ENCODE measurements at regions of chr13 and their contacts with region 1.

Region 1: GRCh38 chr13:111153279-111153976 is 38.3 kb downstream of the ARHGEF7 start:
- DNase-seq: peak; percentile 95
- ATAC-seq: peak; percentile 99

Region 2: DNA sequence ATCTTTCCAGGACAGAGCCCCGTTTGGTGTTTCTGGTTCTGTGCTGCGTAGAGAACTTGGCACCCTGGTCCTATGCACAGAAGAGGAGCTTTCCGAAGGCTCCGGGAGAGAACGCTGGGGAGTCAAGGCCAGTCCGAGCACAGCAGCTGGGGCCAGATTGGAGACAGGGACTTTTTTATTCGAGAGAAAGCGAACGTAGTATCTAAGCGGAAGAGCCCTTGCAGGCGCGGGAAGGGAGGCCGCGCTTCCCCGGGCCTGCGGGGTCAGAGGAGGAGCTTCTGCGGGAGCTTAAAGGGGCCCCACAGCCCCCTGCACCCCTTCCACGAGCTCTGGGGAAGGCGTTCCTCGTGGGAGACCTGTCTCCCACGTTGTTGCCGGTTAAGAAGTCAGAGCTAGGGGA is 86.9 kb before region 1 on chr13:
- intact Hi-C with region 1: loop called (anchors 5 kb)
- DNase-seq: no peak
- ATAC-seq: peak; percentile 55

Region 3: DNA sequence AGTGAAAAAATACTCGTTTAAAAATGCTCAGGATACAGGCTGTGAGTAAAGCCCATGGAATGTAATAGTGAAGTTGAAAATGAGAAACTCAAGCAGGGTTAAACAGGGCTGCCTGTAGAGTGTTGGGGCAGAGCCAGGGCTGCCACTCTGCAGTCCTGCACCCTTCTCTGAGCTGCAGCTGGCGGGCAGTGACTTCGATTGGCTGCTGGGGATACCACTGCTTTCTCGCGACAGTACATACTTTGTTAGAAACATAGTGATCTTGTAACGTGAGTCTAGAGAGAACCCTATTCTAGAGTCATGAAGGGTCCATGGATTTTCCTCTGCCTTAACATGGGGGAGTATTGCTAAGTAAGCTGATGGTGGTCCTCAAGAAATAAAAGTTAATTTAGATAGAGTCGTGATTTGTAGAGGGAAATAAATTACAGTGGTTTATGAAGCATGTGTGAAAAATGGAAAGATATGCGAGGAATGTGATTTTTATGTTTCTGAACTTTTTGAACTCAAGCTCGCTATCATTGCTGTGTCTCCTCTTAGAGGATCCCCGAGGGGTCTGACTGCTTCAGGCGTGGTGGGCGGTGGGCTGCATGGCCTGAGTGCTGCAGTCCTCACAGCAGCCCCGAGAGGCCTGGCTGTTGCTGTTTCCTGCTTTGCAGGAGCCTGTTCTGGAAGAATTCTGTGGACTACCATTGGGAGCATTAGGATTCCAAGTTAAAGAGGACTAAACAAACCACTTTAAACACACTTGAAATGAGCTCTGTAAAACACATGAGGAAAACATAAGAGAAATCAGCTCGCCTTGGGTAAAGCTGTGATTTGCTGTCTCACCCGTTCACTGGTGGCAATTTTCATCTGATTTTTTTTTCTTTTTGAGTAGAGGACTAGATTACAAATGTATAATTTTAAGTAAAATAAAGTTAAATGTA is 57.4 kb after region 1 on chr13:
- intact Hi-C with region 1: loop called (anchors 5 kb)
- DNase-seq: peak; percentile 73
- ATAC-seq: peak; percentile 86

Measured in Right ventricle myocardium superior (tissue), 1 donor.